AG04449 (cell line): ENCODE measurements at regions of chr11 and their contacts with region 1.

Region 1: GRCh38 chr11:66438504-66439466 is at the start of gene MRPL11:
- DNase-seq: peak; percentile 67
- H3K4me3 ChIP-seq: peak within 1 kb of the TSS; percentile 85
- CTCF ChIP-seq: peak; percentile 79

Region 2: GRCh38 chr11:66414120-66414934 is 24.5 kb before region 1 on chr11:
- CTCF ChIA-PET with region 1: interaction called, 1,169 read pairs
- POLR2A ChIA-PET with region 1: no interaction called
- DNase-seq: no peak
- H3K4me3 ChIP-seq: no peak overlapping the region
- CTCF ChIP-seq: no peak

Region 3: DNA sequence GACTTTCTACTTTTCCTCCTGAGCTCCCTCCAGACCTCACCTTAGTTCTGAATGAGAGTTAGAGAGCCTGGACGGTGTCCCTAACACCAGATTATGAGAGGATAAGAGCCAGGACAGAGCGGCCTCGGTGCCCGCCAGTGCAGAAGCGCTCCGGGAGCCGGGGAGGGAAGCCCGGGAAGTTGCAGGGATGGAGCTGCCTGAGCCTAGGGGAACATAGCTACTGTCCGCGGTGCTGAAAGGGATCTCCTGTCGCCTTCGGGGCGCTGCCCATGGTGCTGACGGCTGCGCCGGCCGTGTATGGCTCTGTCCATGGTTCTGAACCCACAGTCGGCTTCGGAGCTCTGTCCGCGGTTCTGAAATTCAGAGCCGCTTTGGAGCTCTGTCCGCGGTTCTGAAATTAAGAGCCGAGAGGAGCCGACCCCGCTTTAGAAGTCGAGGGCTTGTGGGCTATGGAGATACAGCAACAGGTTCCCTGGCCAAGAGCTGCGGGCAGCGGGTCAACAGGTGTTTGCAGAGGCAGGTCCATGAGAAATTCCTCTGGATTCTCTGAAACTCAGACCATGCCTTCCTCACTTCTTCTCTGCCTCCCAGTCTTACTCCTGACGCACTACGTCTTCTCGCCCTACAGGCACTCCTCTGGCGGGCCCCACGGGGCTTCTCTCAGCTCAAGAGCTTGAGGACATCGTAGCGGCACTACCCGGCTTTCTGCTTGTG is 17.1 kb before region 1 on chr11:
- CTCF ChIA-PET with region 1: interaction called, 1,169 read pairs
- POLR2A ChIA-PET with region 1: interaction called, 6 read pairs
- DNase-seq: no peak
- H3K4me3 ChIP-seq: no peak overlapping the region
- CTCF ChIP-seq: no peak

Region 4: GRCh38 chr11:66651016-66651415 is 212.2 kb after region 1 on chr11:
- CTCF ChIA-PET with region 1: no interaction called
- POLR2A ChIA-PET with region 1: no interaction called
- DNase-seq: no peak
- H3K4me3 ChIP-seq: no peak overlapping the region
- CTCF ChIP-seq: no peak

Region 5: GRCh38 chr11:66815646-66816045 is 376.9 kb after region 1 on chr11:
- CTCF ChIA-PET with region 1: no interaction called
- POLR2A ChIA-PET with region 1: no interaction called
- DNase-seq: no peak
- H3K4me3 ChIP-seq: no peak overlapping the region
- CTCF ChIP-seq: no peak